ENCODE measurements at regions of chr1 and their contacts with region 1.

Region 1: GRCh38 chr1:36516372-36517325 is 33.9 kb upstream of the CSF3R start:
- DNase-seq: peak; percentile 83

Region 2: DNA sequence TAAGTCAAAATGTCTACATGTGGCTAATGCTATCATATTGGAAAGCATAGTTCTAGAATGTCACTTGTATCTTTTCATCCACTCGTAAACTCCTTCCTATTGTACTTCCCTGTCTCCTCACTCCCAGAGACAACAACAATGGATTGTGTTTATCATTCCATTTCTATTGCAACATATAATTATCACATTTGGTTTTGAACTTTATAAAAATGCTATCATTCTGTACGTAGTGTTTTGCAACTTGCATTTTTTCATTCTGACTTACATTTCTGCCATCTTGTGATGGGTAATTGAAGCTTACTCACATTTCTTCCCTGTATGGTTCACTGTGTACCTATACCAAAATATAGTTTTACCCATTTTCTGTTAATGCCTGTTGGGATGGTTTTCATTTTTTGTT is 19.4 kb before region 1 on chr1:
- CTCF ChIA-PET with region 1: interaction called, 10 read pairs
- POLR2A ChIA-PET with region 1: no interaction called
- DNase-seq: no peak

Region 3: GRCh38 chr1:36506276-36506920 is 10.3 kb before region 1 on chr1:
- CTCF ChIA-PET with region 1: interaction called, 12 read pairs
- POLR2A ChIA-PET with region 1: no interaction called
- DNase-seq: no peak

Region 4: GRCh38 chr1:36542962-36543515 is 26.4 kb after region 1 on chr1:
- CTCF ChIA-PET with region 1: interaction called, 11 read pairs
- POLR2A ChIA-PET with region 1: no interaction called
- DNase-seq: peak; percentile 50

Region 5: DNA sequence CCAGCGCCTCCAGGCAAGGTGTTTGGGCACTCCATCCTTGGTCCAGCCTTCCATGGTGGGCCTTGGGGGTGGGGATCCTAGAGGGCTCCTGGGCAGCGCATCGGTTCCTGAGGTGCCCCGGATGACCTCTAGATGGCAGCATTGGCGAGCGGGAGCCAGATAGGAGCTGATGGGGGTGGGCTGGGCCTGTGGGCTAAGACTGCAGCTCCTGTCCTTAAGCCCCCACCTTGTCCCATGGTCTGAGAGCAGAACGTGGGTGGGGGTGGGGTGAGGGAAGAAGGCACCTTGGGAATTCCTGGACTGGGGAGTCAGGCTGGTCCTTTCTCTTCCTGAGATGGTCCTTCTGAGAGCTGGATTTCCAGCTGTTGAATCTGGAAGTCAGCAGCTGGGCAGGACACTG is 59.5 kb after region 1 on chr1:
- CTCF ChIA-PET with region 1: interaction called, 10 read pairs
- POLR2A ChIA-PET with region 1: no interaction called
- DNase-seq: peak; percentile 84

Region 6: DNA sequence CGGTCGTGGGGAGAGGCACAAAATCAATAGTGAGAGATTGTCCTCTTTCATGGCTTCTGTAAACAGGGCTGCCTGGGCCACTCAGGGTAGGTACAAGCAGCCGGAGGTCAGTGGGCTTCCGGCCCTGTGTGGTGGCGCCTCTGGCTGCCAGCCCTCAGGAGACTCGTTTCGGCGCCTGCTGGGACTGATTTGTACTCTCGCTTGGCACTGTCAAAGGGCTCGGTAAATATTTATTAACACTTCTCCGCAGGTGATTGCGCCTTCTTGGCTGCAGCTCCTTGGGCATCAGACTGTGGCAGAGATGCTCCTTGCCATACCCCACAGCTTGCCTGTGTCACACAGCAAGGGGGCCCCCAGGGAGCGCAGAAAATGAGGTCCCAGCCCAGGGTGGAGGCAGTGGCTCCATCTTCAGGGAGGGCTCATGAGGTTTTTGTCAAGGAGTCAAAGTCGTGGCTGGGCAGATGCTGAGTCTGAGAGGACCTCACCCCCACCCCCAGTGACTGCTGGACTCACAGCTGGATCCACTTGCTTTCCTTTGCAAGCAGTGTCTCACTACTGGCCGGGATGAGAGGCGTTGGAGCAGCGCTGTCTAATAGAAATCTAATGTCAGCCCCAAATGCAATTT is 255.1 kb after region 1 on chr1:
- CTCF ChIA-PET with region 1: no interaction called
- POLR2A ChIA-PET with region 1: no interaction called
- DNase-seq: no peak

Region 7: GRCh38 chr1:36807262-36807661 is 290.6 kb after region 1 on chr1:
- CTCF ChIA-PET with region 1: no interaction called
- POLR2A ChIA-PET with region 1: no interaction called
- DNase-seq: no peak

Measured in HEK293T (cell line).